ENCODE measurements at regions of chr3 and their contacts with region 1.

Region 1: DNA sequence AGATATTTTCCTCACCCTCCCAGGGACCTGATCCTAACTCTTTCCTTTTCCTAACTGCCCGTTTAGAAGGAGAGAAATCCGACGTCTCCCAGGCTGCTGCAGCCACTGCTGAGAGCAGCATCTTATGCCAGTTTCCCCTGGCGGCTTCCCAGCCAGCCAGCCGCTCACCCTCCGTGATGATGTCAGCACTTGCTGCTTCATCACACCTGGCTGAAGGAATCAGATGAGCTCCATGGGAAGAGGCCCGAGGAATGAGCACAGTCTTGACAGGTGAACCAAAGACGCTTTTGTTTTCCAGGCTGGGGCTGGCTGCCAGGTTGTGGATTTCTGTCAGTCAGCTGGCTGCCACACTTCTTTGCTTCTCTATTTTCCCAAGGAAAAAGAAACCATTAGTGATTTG is 445.1 kb upstream of the RBMS3 start:
- DNase-seq: peak; percentile 42 to 53
- H3K4me3 ChIP-seq: no peak overlapping the region
- H3K27ac ChIP-seq: no peak overlapping the region
- H3K4me1 ChIP-seq: no peaks in the 10 kb centered on the region
- H3K27me3 ChIP-seq: no peaks in the 10 kb centered on the region
- CTCF ChIP-seq: no peak
- POLR2A ChIP-seq: no peak

Region 2: GRCh38 chr3:28808068-28808467 is 27.7 kb before region 1 on chr3:
- intact Hi-C with region 1: loop called (anchors 2 kb)
- DNase-seq: no peak
- H3K4me3 ChIP-seq: no peak overlapping the region
- H3K27ac ChIP-seq: no peak overlapping the region
- H3K4me1 ChIP-seq: no peaks in the 10 kb centered on the region
- H3K27me3 ChIP-seq: no peaks in the 10 kb centered on the region
- CTCF ChIP-seq: no peak
- POLR2A ChIP-seq: no peak